ENCODE measurements at regions of chr7 and their contacts with region 1.

Region 1: DNA sequence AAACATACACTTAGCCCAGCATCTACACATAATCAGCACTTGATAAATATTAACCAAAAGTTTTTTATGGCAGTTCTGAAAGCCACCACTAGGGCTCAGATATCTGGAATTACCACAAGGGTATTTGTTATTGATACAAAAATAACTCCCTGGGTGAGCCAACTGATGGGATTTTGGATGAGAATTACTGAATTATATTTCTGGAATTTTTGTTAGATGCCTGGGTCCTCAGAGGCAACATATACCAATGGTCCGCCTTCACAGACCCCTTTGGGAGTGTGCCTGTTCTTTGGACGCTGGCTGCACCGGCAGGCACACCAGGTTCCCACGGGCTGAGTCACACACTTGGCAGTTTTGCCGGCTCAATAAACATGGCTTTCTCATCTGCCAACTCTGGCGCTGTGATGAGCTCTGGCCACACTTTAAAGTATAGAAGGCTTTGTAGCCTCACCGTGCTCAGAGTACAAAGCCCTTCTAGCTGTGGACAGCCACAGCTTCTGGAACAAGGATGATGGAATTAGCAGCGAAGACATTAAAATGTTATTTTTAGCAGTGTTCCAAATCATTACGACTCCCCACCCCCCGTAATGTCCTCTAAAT is 24.5 kb upstream of the EEPD1 start:
- DNase-seq: peak; percentile 80
- ATAC-seq: peak; percentile 89

Region 2: GRCh38 chr7:36207451-36208291 is 79.1 kb after region 1 on chr7:
- intact Hi-C with region 1: loop called (anchors 2 kb)
- DNase-seq: peak; percentile 77
- ATAC-seq: peak; percentile 83

Measured in Right ventricle myocardium inferior (tissue), 1 donor.